Activated CD4-positive, alpha-beta T cell treated with anti-CD3 and anti-CD28 coated beads, Interleukin-2, amount 10 ng/mL, durations not matched to agents 24 days and 14 days (primary cell): ENCODE measurements at regions of chr3 and their contacts with region 1.

Region 1: GRCh38 chr3:15601397-15602145 is at the starts of genes BTD and HACL1:
- DNase-seq: peak; percentile 99
- H3K4me3 Mint-ChIP-seq: peak within 1 kb of the TSS; percentile 98
- H3K27ac Mint-ChIP-seq: peak within 1 kb of the TSS; percentile 98
- H3K4me1 Mint-ChIP-seq: peaks cover 30% of the 10 kb centered on the region
- H3K27me3 Mint-ChIP-seq: peaks cover 2% of the 10 kb centered on the region
- total RNA-seq, gene BTD: 2.0 and 2.1 TPM in 2 replicates
- total RNA-seq, gene HACL1: 19.3 and 21.4 TPM in 2 replicates

Region 2: DNA sequence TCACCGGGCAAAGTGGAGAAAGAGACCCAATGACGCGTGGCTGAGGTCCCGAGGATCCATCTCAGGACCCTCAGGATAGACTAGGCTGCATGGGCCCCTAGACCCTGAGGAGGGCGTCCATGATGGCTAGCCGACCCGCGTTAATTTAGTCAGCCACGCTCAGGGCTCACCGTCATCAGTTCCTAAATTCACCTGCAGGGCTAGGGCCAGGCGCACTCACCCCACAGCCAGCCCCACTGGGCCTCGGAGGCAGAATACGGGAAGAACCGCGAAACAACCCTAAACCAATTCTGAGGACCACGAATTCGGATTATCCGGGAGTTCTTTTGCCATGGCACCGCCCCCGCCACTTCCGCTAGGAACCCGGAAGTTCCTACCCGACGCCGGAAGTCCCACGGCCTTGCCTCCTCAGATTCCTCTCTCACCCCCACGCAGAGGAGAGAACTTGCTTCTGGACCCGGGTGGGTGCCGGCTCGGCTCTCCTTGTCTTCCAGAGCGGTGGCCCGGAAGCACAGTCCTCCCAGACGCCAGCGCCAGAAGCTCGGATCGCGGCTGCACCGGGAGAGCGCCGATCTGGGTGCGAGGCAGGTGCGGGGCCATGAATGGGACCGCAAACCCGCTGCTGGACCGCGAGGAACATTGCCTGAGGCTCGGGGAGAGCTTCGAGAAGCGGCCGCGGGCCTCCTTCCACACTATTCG is 174.2 kb before region 1 on chr3 and contains the starts of genes EAF1 and METTL6:
- intact Hi-C with region 1: loop called (anchors 1 kb)
- DNase-seq: peak; percentile 96
- H3K4me3 Mint-ChIP-seq: peak within 1 kb of the TSS; percentile 96
- H3K27ac Mint-ChIP-seq: peak within 1 kb of the TSS; percentile 95
- H3K4me1 Mint-ChIP-seq: peaks cover 47% of the 10 kb centered on the region
- H3K27me3 Mint-ChIP-seq: no peaks in the 10 kb centered on the region
- total RNA-seq, gene EAF1: 24.2 and 25.7 TPM in 2 replicates
- total RNA-seq, gene METTL6: 15.2 and 17.4 TPM in 2 replicates

Region 3: GRCh38 chr3:15458212-15458780 is 143.3 kb before region 1 on chr3:
- intact Hi-C with region 1: no loop called
- DNase-seq: no peak
- H3K4me3 Mint-ChIP-seq: no peak overlapping the region
- H3K27ac Mint-ChIP-seq: no peak overlapping the region
- H3K4me1 Mint-ChIP-seq: peaks cover 26% of the 10 kb centered on the region
- H3K27me3 Mint-ChIP-seq: no peaks in the 10 kb centered on the region

Region 4: DNA sequence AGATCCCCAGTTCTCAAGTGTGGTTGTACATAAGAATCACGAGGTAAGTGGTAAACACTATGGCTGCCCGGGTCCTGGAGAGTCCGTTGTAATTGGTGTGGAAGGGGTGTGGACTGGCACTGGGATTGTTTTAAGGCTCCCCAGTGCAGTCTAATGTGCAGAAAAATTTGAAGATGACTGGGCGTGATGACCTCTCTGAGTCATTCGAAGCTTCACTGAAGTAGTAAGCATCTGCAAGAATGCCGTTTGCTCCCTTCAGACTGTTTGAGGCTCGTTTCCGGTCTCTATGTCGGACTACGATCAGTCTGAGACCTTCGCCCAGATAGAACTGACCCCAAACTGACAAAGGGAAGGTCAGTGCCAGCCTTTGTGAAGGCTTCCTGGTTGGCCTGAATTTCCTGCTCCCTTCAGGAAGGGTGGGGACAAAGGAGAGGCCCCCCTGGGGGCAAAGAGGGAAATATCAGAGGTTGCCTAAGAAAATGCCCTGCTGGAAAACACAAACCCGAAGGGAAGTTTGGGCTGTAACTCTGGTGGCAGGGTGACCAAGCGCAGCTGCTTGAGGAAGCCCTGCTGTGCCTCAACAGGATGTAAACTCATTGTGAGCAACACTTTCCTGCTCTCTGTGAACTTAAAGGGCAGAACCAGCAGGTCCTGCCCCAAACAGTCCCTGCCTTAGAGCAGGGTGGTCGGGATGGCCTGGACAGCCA is 34.6 kb after region 1 on chr3:
- intact Hi-C with region 1: loop called (anchors 5 kb)
- DNase-seq: peak; percentile 78
- H3K4me3 Mint-ChIP-seq: peak overlapping the region; percentile 68
- H3K27ac Mint-ChIP-seq: peak overlapping the region; percentile 94
- H3K4me1 Mint-ChIP-seq: peaks cover 40% of the 10 kb centered on the region
- H3K27me3 Mint-ChIP-seq: no peaks in the 10 kb centered on the region

Region 5: GRCh38 chr3:15815696-15816095 is 214.1 kb after region 1 on chr3:
- intact Hi-C with region 1: loop called (anchors 1 kb)
- DNase-seq: no peak
- H3K4me3 Mint-ChIP-seq: no peak overlapping the region
- H3K27ac Mint-ChIP-seq: no peak overlapping the region
- H3K4me1 Mint-ChIP-seq: peaks cover 23% of the 10 kb centered on the region
- H3K27me3 Mint-ChIP-seq: no peaks in the 10 kb centered on the region

Region 6: DNA sequence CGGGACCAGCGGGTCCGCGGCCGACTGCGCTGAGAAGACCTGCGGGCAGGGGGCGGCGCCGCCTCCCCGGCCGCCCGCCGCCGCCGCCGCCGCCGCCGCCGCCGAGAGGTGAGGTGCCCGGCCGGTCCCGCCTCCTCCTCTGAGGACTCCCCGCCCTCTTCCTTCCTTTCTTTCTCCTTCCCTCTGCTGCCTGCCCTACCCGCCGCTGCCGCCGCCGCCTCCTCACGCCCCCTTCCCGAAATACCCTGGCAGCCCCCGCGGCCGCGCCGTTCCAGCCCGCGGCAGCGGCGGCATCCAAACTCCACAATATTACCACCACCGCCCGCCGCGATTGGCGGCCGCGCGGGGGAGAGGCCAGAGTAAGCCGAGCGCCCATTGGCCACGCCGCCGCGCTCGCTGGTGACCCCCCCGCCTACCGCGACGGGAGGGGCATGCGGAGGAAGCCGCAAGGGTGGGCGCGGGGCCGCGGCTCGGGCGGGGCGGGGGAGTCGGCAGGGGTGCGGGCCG is 258.0 kb after region 1 on chr3:
- intact Hi-C with region 1: loop called (anchors 1 kb)
- DNase-seq: peak; percentile 94
- H3K4me3 Mint-ChIP-seq: peak overlapping the region; percentile 92
- H3K27ac Mint-ChIP-seq: peak overlapping the region; percentile 96
- H3K4me1 Mint-ChIP-seq: peaks cover 25% of the 10 kb centered on the region
- H3K27me3 Mint-ChIP-seq: peaks cover 9% of the 10 kb centered on the region